ENCODE measurements at regions of chr16 and their contacts with region 1.

Region 1: DNA sequence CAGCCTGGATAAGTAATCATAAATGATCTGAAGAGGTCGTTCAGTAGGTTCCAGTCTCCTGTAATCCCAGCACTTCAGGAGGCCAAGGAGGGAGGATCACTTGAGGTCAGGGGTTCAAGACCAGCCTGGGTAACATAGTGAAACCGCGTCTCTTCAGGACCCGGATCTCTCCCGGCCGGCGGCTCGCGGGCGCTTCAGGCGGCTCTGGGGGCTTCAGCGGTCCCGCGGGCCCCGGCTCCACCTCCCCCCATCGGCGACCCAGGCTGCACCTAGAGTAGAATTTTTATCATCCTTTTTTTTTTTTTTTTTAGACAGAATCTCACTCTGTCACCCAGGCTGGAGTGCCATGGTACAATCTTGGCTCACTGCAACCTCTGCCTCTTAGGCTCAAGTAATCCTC is 95.9 kb downstream of the ABCC12 start:
- DNase-seq: no peak
- ATAC-seq: no peak
- H3K4me3 ChIP-seq: no peak overlapping the region
- H3K27ac ChIP-seq: no peak overlapping the region
- H3K4me1 ChIP-seq: peaks cover 3% of the 10 kb centered on the region; the same call in 1 of the 2 replicates
- H3K27me3 ChIP-seq: no peaks in the 10 kb centered on the region
- CTCF ChIP-seq: no peak

Region 2: GRCh38 chr16:47949714-47950113 is 110.2 kb before region 1 on chr16:
- CTCF ChIA-PET with region 1: no interaction called
- POLR2A ChIA-PET with region 1: no interaction called
- in situ Hi-C with region 1: no loop called
- intact Hi-C with region 1: no loop called
- DNase-seq: no peak
- ATAC-seq: no peak
- H3K4me3 ChIP-seq: no peak overlapping the region
- H3K27ac ChIP-seq: no peak overlapping the region
- H3K4me1 ChIP-seq: no peaks in the 10 kb centered on the region
- H3K27me3 ChIP-seq: no peaks in the 10 kb centered on the region
- CTCF ChIP-seq: no peak

Region 3: GRCh38 chr16:48128769-48129168 is 68.8 kb after region 1 on chr16:
- CTCF ChIA-PET with region 1: no interaction called
- POLR2A ChIA-PET with region 1: interaction called, 12 read pairs
- in situ Hi-C with region 1: no loop called
- intact Hi-C with region 1: no loop called
- DNase-seq: no peak
- ATAC-seq: no peak
- H3K4me3 ChIP-seq: no peak overlapping the region
- H3K27ac ChIP-seq: peak overlapping the region; percentile 71
- H3K4me1 ChIP-seq: peaks cover 18% of the 10 kb centered on the region
- H3K27me3 ChIP-seq: no peaks in the 10 kb centered on the region
- CTCF ChIP-seq: no peak

Region 4: GRCh38 chr16:49788572-49788971 is 1728.6 kb after region 1 on chr16:
- CTCF ChIA-PET with region 1: no interaction called
- POLR2A ChIA-PET with region 1: no interaction called
- in situ Hi-C with region 1: no loop called
- intact Hi-C with region 1: no loop called
- DNase-seq: no peak
- ATAC-seq: no peak
- H3K4me3 ChIP-seq: no peak overlapping the region
- H3K27ac ChIP-seq: no peak overlapping the region
- H3K4me1 ChIP-seq: no peaks in the 10 kb centered on the region
- H3K27me3 ChIP-seq: no peaks in the 10 kb centered on the region; the same call in 1 of the 2 replicates
- CTCF ChIP-seq: no peak